OCI-LY7 (cell line): ENCODE measurements at regions of chr2 and their contacts with region 1.

Region 1: DNA sequence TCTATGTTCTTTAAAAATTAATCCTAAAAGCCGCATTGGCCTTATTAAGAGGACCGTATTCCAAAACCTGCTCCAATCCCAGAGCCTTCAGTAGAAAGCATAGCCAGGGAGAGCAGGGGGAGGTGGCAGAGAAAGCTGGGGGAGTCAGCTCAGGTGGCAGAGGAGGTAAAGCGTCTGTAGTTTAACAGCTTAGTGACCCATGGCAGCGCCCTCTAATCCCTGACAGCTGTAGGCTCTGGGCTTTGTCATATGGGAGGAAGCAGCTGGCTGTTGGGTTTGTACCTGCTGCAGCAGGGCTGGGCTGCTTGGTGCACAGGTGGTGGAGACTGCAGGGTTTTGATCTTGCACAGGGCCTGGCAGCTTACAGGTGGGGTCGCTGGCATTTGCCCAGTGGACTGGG is 50.6 kb downstream of the THNSL2 start:
- DNase-seq: peak; percentile 30
- H3K4me3 ChIP-seq: no peak overlapping the region
- H3K27ac ChIP-seq: no peak overlapping the region
- H3K4me1 ChIP-seq: no peaks in the 10 kb centered on the region
- CTCF ChIP-seq: no peak

Region 2: DNA sequence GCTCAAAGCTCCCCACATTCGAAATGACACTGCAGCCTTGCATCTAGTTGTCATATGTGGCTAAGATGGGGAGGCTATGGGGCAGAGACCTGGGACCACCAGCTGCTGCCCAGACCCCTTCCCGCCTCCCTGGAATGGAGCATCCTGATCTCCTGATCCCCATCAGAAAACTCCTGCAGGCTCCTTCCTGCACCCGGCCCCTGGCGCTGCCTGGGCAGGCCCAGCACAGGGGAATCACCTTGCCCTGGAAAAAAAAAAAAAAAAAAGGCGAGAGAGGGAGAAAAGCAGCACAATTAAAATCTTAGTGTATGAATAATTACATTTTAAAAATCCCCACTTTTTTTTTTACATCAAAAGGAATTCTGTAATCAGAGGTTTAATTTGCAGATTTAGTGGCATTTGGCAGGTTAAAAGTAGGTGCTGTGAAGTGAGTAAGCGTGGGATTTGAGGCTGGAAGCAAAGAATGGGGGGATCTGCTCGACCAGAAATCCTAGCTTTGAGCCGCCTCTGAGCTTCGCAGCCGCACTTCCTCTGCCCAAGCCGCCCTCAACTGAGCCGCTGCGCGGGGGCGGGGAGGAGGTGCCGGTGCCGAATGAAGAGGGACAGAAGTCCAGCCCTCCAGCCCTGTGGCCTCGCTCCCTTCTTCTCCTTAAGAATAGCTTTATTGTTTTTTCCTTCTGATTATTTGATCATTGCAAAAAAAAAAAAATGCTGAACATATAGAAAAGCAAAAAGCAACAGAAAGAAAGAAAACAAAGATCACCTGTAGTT is 20.6 kb before region 1 on chr2:
- CTCF ChIA-PET with region 1: no interaction called
- POLR2A ChIA-PET with region 1: no interaction called
- intact Hi-C with region 1: no loop called
- DNase-seq: no peak
- H3K4me3 ChIP-seq: no peak overlapping the region
- H3K27ac ChIP-seq: no peak overlapping the region
- H3K4me1 ChIP-seq: no peaks in the 10 kb centered on the region
- CTCF ChIP-seq: no peak

Region 3: DNA sequence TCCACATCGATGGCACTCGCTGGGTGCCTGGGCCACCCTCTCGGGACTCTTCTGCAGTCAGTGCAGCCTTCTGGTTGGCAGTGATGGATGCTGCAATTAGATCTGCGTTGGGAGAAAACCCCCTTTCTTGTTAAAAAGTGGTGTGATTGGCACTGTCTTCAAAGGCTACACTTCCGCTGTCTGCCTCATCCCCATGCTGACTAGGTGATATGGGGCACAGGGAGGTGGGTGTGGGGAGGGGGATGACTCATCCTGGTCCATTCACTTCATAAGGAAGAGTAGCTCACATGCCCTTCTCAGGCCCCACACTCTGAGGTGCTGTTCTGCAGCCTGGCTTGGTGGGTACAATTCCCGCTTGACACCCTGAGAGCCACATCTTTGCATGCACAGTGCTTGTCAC is 26.8 kb after region 1 on chr2:
- CTCF ChIA-PET with region 1: no interaction called
- POLR2A ChIA-PET with region 1: no interaction called
- intact Hi-C with region 1: no loop called
- DNase-seq: no peak
- H3K4me3 ChIP-seq: no peak overlapping the region
- H3K27ac ChIP-seq: no peak overlapping the region
- H3K4me1 ChIP-seq: no peaks in the 10 kb centered on the region
- CTCF ChIP-seq: no peak

Region 4: GRCh38 chr2:88288414-88288813 is 67.7 kb after region 1 on chr2:
- CTCF ChIA-PET with region 1: no interaction called
- POLR2A ChIA-PET with region 1: interaction called, 14 read pairs
- intact Hi-C with region 1: no loop called
- DNase-seq: no peak
- H3K4me3 ChIP-seq: no peak overlapping the region
- H3K27ac ChIP-seq: no peak overlapping the region
- H3K4me1 ChIP-seq: no peaks in the 10 kb centered on the region
- CTCF ChIP-seq: no peak